ENCODE measurements at regions of chr3 and their contacts with region 1.

Region 1: GRCh38 chr3:143795874-143796273 is 52.4 kb downstream of the SLC9A9 start:
- DNase-seq: no peak

Region 2: GRCh38 chr3:143242101-143242500 is 553.8 kb before region 1 on chr3:
- intact Hi-C with region 1: no loop called
- DNase-seq: no peak

Region 3: GRCh38 chr3:143806038-143806437 is 10.2 kb after region 1 on chr3:
- intact Hi-C with region 1: loop called (anchors 1 kb)
- DNase-seq: no peak

Region 4: GRCh38 chr3:144073698-144074097 is 277.8 kb after region 1 on chr3:
- intact Hi-C with region 1: no loop called
- DNase-seq: no peak